GM12878 (cell line): ENCODE measurements at regions of chr2 and their contacts with region 1.

Region 1: GRCh38 chr2:73163483-73164367 is 38.6 kb upstream of the NOTO start:
- DNase-seq: no peak
- ATAC-seq: peak; percentile 99
- H3K4me3 ChIP-seq: no peak overlapping the region
- H3K27ac ChIP-seq: no peak overlapping the region
- H3K4me1 ChIP-seq: no peaks in the 10 kb centered on the region
- H3K27me3 ChIP-seq: peaks cover 0 to 2% of the 10 kb centered on the region in 2 experiments; a peak in 1 of 4 replicates
- CTCF ChIP-seq: peak; percentile 85 to 91 (median 88)
- EP300 ChIP-seq: no peak
- POLR2A ChIP-seq: no peak
- RAD21 ChIP-seq: peak; percentile 83

Region 2: DNA sequence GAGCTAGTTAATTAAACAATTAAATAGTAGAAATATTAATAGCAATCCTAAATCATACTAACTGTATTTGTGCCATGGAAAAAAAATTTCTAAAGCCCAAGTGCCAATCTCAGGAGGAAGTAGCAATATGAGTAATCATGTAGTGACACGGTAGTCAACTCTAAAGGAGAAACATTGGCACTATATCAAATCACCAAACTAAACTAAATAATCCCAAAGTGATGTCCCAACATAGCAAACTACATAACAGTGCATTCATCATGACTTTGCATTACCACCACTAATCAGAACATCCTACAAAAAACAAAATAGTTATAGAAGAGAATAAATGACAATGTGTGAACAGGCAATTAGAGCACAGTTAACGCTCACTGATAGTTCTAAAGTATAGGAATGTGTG is 533.0 kb before region 1 on chr2:
- CTCF ChIA-PET with region 1: no interaction called
- POLR2A ChIA-PET with region 1: no interaction called
- RAD21 ChIA-PET with region 1: no interaction called
- SMC1A ChIA-PET with region 1: no interaction called
- in situ Hi-C with region 1: no loop called
- intact Hi-C with region 1: no loop called
- DNase-seq: no peak
- ATAC-seq: no peak
- H3K4me3 ChIP-seq: no peak overlapping the region
- H3K27ac ChIP-seq: no peak overlapping the region
- H3K4me1 ChIP-seq: no peaks in the 10 kb centered on the region
- H3K27me3 ChIP-seq: no peaks in the 10 kb centered on the region
- CTCF ChIP-seq: no peak
- EP300 ChIP-seq: no peak
- POLR2A ChIP-seq: no peak
- RAD21 ChIP-seq: no peak

Region 3: DNA sequence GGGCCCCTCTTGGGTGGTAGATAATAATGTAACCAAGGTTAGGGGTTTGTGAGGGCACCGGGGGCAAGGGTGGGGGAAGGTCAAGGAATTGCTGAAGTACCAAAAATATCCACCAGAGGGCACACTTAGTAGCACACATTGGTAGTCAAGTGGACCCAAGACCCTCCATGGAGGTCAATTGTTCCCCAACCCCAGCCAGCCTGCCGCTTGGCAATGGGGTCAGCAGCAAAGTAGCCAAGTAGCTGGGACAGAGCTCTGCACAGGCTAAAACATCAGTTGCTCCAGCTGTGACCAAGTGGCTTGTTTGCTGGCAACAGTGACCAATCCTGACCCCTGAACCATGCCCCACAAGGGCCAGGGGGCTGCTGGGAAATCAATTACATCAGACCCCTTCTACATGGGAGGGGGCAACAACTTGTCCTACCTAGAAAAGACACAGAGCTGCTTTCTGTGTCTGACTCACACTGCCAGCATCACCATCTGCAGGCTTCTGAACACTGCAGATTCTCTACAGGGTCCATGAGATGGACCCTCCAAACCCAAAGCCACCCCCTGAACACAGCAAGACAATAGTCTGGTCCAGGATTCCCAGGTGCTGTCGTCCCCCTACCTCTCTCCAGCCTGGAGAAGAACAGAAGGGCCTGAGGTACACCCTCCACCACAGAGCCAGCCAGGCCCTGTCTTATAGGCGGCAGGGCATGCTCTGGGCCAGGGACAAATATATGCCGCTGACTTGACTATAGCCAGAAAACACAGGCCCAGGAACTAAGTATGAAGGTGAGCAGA is 170.4 kb before region 1 on chr2:
- CTCF ChIA-PET with region 1: interaction called, 5 read pairs
- POLR2A ChIA-PET with region 1: no interaction called
- RAD21 ChIA-PET with region 1: no interaction called
- SMC1A ChIA-PET with region 1: no interaction called
- in situ Hi-C with region 1: loop called (anchors 5 kb)
- intact Hi-C with region 1: loop called (anchors 1 kb)
- DNase-seq: peak; percentile 3
- ATAC-seq: peak; percentile 89
- H3K4me3 ChIP-seq: no peak overlapping the region
- H3K27ac ChIP-seq: no peak overlapping the region
- H3K4me1 ChIP-seq: no peaks in the 10 kb centered on the region
- H3K27me3 ChIP-seq: no peaks in the 10 kb centered on the region
- CTCF ChIP-seq: peak; percentile 68 to 76 (median 73)
- EP300 ChIP-seq: no peak
- POLR2A ChIP-seq: no peak
- RAD21 ChIP-seq: peak; percentile 41; the same call in 1 of the 2 replicates

Region 4: GRCh38 chr2:72999729-73000725 is 163.7 kb before region 1 on chr2:
- CTCF ChIA-PET with region 1: interaction called, 3 read pairs
- POLR2A ChIA-PET with region 1: no interaction called
- RAD21 ChIA-PET with region 1: no interaction called
- SMC1A ChIA-PET with region 1: interaction called, 3 read pairs
- in situ Hi-C with region 1: loop called (anchors 5 kb)
- intact Hi-C with region 1: no loop called
- DNase-seq: no peak
- ATAC-seq: no peak
- H3K4me3 ChIP-seq: no peak overlapping the region
- H3K27ac ChIP-seq: no peak overlapping the region
- H3K4me1 ChIP-seq: no peaks in the 10 kb centered on the region
- H3K27me3 ChIP-seq: no peaks in the 10 kb centered on the region
- CTCF ChIP-seq: no peak
- EP300 ChIP-seq: no peak
- POLR2A ChIP-seq: no peak
- RAD21 ChIP-seq: no peak

Region 5: GRCh38 chr2:73085691-73086360 is 77.9 kb before region 1 on chr2:
- CTCF ChIA-PET with region 1: interaction called, 7 read pairs
- POLR2A ChIA-PET with region 1: no interaction called
- RAD21 ChIA-PET with region 1: interaction called, 5 read pairs
- SMC1A ChIA-PET with region 1: interaction called, 4 read pairs
- in situ Hi-C with region 1: loop called (anchors 5 kb)
- intact Hi-C with region 1: loop called (anchors 1 kb)
- DNase-seq: no peak
- ATAC-seq: peak; percentile 98
- H3K4me3 ChIP-seq: no peak overlapping the region
- H3K27ac ChIP-seq: no peak overlapping the region
- H3K4me1 ChIP-seq: no peaks in the 10 kb centered on the region
- H3K27me3 ChIP-seq: no peaks in the 10 kb centered on the region; a peak in 2 of 4 replicates
- CTCF ChIP-seq: peak; percentile 93 to 95 (median 94)
- EP300 ChIP-seq: no peak
- POLR2A ChIP-seq: no peak
- RAD21 ChIP-seq: peak; percentile 92

Region 6: DNA sequence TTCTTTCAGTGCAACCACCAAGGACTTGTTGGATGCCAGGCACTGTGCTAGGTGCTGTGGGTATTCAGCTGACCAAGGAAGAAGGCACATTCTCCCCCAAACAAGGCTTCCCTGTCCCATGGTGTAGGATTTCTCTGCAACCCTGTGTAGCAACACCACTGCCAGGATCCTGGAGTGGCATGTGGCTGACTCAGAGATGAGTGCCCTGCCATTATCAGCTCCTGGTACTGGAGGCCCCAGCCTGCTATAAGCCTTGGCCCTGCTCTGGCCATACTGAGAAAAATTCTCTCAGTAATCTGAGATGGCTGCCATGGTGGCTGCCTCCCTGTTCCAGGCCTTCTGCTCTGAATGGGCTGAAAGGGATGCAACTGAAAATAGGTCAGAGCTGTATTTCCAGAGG is 54.6 kb after region 1 on chr2:
- CTCF ChIA-PET with region 1: no interaction called
- POLR2A ChIA-PET with region 1: no interaction called
- RAD21 ChIA-PET with region 1: no interaction called
- SMC1A ChIA-PET with region 1: no interaction called
- in situ Hi-C with region 1: no loop called
- intact Hi-C with region 1: no loop called
- DNase-seq: no peak
- ATAC-seq: no peak
- H3K4me3 ChIP-seq: no peak overlapping the region
- H3K27ac ChIP-seq: no peak overlapping the region
- H3K4me1 ChIP-seq: peaks cover 7% of the 10 kb centered on the region
- H3K27me3 ChIP-seq: no peaks in the 10 kb centered on the region
- CTCF ChIP-seq: no peak
- EP300 ChIP-seq: no peak
- POLR2A ChIP-seq: no peak
- RAD21 ChIP-seq: no peak